PC-3 (cell line): ENCODE measurements at regions of chr7 and their contacts with region 1.

Region 1: DNA sequence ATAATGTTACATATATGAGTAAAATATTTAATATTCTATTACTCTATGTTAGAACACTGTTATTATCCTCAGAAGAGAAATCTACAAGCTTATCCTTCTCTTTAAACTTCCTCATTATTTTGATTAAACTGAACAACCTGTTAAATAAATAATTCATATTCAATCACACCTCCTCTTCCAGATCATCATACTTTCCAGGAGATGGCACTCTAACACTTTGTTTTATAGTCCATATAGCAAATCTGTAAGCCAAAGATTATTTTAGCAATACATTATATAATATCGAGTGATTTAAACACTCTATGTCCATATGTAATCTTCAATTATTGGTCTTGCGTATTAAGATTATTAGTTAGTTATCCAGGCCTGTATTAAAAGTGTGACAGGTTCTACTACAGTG is 694.1 kb downstream of the ANKRD7 start:
- DNase-seq: peak; percentile 42
- ATAC-seq: peak; percentile 48; the same call in 1 of the 2 replicates
- H3K4me3 ChIP-seq: no peak overlapping the region
- H3K27ac ChIP-seq: no peak overlapping the region
- H3K4me1 ChIP-seq: no peaks in the 10 kb centered on the region
- H3K27me3 ChIP-seq: no peaks in the 10 kb centered on the region
- CTCF ChIP-seq: peak; percentile 65

Region 2: DNA sequence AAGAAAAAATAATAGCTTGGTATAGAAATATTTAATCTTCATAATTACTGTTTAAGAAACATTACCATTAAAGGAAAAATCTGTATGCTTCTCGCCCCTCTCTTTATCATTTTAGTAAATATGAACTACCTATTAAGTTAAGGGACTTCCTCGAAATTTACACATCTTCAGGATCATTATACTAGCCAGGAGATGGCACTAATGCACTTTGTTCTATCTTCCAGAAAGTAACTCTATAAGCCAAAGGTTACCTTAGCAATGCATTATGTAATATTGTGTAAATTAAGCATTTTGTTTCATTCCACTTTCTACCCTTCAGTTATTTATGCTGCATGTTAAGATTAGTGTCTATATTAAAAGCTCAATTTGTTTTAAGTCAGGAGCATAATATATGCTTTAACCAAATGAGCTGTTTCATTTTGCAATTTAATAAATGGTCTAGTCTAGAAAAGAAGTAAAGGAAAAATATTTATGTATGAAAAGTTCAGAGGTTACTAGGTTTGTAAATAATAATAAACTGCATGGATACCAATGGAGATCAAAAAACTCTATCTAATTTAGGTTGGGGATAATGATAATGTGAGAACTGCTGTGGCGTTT is 565.6 kb before region 1 on chr7:
- CTCF ChIA-PET with region 1: no interaction called
- POLR2A ChIA-PET with region 1: no interaction called
- intact Hi-C with region 1: loop called (anchors 2 kb)
- DNase-seq: peak; percentile 56
- ATAC-seq: peak; percentile 76
- H3K4me3 ChIP-seq: no peak overlapping the region
- H3K27ac ChIP-seq: no peak overlapping the region
- H3K4me1 ChIP-seq: no peaks in the 10 kb centered on the region
- H3K27me3 ChIP-seq: no peaks in the 10 kb centered on the region
- CTCF ChIP-seq: peak; percentile 55

Region 3: GRCh38 chr7:118938845-118939244 is 20.3 kb after region 1 on chr7:
- CTCF ChIA-PET with region 1: no interaction called
- POLR2A ChIA-PET with region 1: no interaction called
- intact Hi-C with region 1: no loop called
- DNase-seq: no peak
- ATAC-seq: no peak
- H3K4me3 ChIP-seq: no peak overlapping the region
- H3K27ac ChIP-seq: no peak overlapping the region
- H3K4me1 ChIP-seq: no peaks in the 10 kb centered on the region
- H3K27me3 ChIP-seq: no peaks in the 10 kb centered on the region
- CTCF ChIP-seq: no peak

Region 4: GRCh38 chr7:119175911-119176627 is 257.5 kb after region 1 on chr7:
- CTCF ChIA-PET with region 1: interaction called, 3 read pairs
- POLR2A ChIA-PET with region 1: no interaction called
- intact Hi-C with region 1: loop called (anchors 1 kb)
- DNase-seq: peak; percentile 79
- ATAC-seq: peak; percentile 90
- H3K4me3 ChIP-seq: no peak overlapping the region
- H3K27ac ChIP-seq: no peak overlapping the region
- H3K4me1 ChIP-seq: no peaks in the 10 kb centered on the region
- H3K27me3 ChIP-seq: no peaks in the 10 kb centered on the region
- CTCF ChIP-seq: peak; percentile 87

Region 5: GRCh38 chr7:119197877-119198527 is 279.4 kb after region 1 on chr7:
- CTCF ChIA-PET with region 1: no interaction called
- POLR2A ChIA-PET with region 1: no interaction called
- intact Hi-C with region 1: loop called (anchors 1 kb)
- DNase-seq: peak; percentile 73
- ATAC-seq: peak; percentile 73
- H3K4me3 ChIP-seq: no peak overlapping the region
- H3K27ac ChIP-seq: no peak overlapping the region
- H3K4me1 ChIP-seq: no peaks in the 10 kb centered on the region
- H3K27me3 ChIP-seq: no peaks in the 10 kb centered on the region
- CTCF ChIP-seq: peak; percentile 75

Region 6: DNA sequence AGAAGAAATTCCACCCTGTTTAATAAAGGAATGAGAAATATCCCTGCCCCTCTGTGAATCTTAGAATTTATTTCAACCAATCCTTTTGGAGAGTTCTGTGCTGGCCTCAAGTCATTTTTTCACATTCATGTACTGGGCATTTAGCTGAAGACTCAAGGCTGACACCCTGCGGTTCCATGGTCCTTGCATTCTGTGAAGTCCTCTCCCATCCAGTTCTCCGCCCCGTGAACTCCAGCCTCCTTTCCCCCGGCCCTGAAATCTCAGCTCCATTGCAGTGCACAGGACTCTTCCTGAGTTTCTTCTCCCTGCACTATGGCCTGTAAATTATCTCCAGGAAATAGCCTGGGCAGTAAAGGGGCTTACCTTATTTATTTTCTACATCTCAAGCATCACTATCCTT is 1171.4 kb after region 1 on chr7:
- CTCF ChIA-PET with region 1: interaction called, 4 read pairs
- POLR2A ChIA-PET with region 1: no interaction called
- intact Hi-C with region 1: loop called (anchors 5 kb)
- DNase-seq: peak; percentile 65
- ATAC-seq: peak; percentile 98
- H3K4me3 ChIP-seq: no peak overlapping the region
- H3K27ac ChIP-seq: no peak overlapping the region
- H3K4me1 ChIP-seq: no peaks in the 10 kb centered on the region
- H3K27me3 ChIP-seq: no peaks in the 10 kb centered on the region
- CTCF ChIP-seq: peak; percentile 59

Region 7: GRCh38 chr7:120272261-120272660 is 1353.7 kb after region 1 on chr7:
- CTCF ChIA-PET with region 1: interaction called, 3 read pairs
- POLR2A ChIA-PET with region 1: no interaction called
- intact Hi-C with region 1: loop called (anchors 1 kb)
- DNase-seq: peak; percentile 66
- ATAC-seq: peak; percentile 67
- H3K4me3 ChIP-seq: peak overlapping the region; percentile 72
- H3K27ac ChIP-seq: no peak overlapping the region
- H3K4me1 ChIP-seq: no peaks in the 10 kb centered on the region
- H3K27me3 ChIP-seq: peaks cover 7% of the 10 kb centered on the region
- CTCF ChIP-seq: peak; percentile 86

Region 8: GRCh38 chr7:120725376-120726039 is 1807.0 kb after region 1 on chr7:
- CTCF ChIA-PET with region 1: no interaction called
- POLR2A ChIA-PET with region 1: no interaction called
- intact Hi-C with region 1: loop called (anchors 2 kb)
- DNase-seq: peak; percentile 64
- ATAC-seq: no peak
- H3K4me3 ChIP-seq: peak overlapping the region; percentile 6; the same call in 1 of the 2 replicates
- H3K27ac ChIP-seq: no peak overlapping the region
- H3K4me1 ChIP-seq: no peaks in the 10 kb centered on the region
- H3K27me3 ChIP-seq: no peaks in the 10 kb centered on the region
- CTCF ChIP-seq: peak; percentile 79